T-cell (primary cell): ENCODE measurements at regions of chr1 and their contacts with region 1.

Region 1: DNA sequence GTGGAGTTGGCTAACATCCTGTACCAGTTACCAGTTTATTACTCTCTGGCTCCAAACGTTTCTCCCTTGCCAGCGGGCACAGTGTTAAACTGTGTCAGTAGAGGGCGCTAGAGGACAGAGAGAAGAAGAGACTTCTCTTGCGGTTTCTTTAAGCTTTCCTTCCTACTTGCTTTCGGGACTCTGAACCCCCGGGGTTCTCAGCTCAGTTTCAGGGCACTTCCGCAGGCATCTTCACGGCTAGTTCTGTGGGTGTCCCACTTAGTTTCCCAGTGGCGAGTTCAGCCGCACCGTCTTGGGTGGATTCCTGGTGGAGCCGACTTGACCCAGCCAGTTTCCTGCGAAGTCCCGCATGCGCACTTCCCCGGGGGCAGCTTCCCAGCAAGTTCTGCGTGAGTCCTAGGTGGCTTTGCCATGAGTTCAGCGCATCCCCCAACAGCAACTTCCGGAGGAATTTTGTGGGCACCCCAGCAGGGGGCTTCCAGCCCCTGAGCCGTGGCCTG is 37.9 kb upstream of the BTG2 start:
- DNase-seq: peak; percentile 53 to 94 (median 76)
- ATAC-seq: peak; percentile 55 to 69 (median 66)
- H3K4me3 ChIP-seq: peak overlapping the region; percentile 28 to 58
- H3K4me3 Mint-ChIP-seq: peak overlapping the region; percentile 85 to 86 (median 85)
- H3K27ac ChIP-seq: peak overlapping the region; percentile 60
- H3K27ac Mint-ChIP-seq: peak overlapping the region; percentile 90 to 93
- H3K4me1 ChIP-seq: peaks cover 14 to 37% of the 10 kb centered on the region in 2 experiments
- H3K4me1 Mint-ChIP-seq: peaks cover 20 to 24% (median 22%) of the 10 kb centered on the region in 3 donors
- H3K27me3 ChIP-seq: peaks cover 0 to 5% of the 10 kb centered on the region in 2 experiments
- H3K27me3 Mint-ChIP-seq: no peaks in the 10 kb centered on the region

Region 2: GRCh38 chr1:203177470-203178039 is 89.8 kb before region 1 on chr1:
- CTCF ChIA-PET with region 1: no interaction called
- POLR2A ChIA-PET with region 1: no interaction called
- DNase-seq: no peak
- ATAC-seq: no peak
- H3K4me3 ChIP-seq: no peak overlapping the region
- H3K4me3 Mint-ChIP-seq: no peak overlapping the region
- H3K27ac ChIP-seq: no peak overlapping the region
- H3K27ac Mint-ChIP-seq: no peak overlapping the region
- H3K4me1 ChIP-seq: no peaks in the 10 kb centered on the region
- H3K4me1 Mint-ChIP-seq: no peaks in the 10 kb centered on the region
- H3K27me3 ChIP-seq: peaks cover 0 to 39% of the 10 kb centered on the region in 2 experiments
- H3K27me3 Mint-ChIP-seq: peaks cover 0 to 14% of the 10 kb centered on the region in 2 donors

Region 3: GRCh38 chr1:203202431-203203245 is 64.8 kb before region 1 on chr1:
- CTCF ChIA-PET with region 1: no interaction called
- POLR2A ChIA-PET with region 1: no interaction called
- DNase-seq: no peak
- ATAC-seq: no peak
- H3K4me3 ChIP-seq: no peak overlapping the region
- H3K4me3 Mint-ChIP-seq: no peak overlapping the region
- H3K27ac ChIP-seq: no peak overlapping the region
- H3K27ac Mint-ChIP-seq: no peak overlapping the region
- H3K4me1 ChIP-seq: no peaks in the 10 kb centered on the region
- H3K4me1 Mint-ChIP-seq: no peaks in the 10 kb centered on the region
- H3K27me3 ChIP-seq: peaks cover 0 to 35% of the 10 kb centered on the region in 2 experiments
- H3K27me3 Mint-ChIP-seq: peaks cover 12 to 33% of the 10 kb centered on the region in 2 donors

Region 4: DNA sequence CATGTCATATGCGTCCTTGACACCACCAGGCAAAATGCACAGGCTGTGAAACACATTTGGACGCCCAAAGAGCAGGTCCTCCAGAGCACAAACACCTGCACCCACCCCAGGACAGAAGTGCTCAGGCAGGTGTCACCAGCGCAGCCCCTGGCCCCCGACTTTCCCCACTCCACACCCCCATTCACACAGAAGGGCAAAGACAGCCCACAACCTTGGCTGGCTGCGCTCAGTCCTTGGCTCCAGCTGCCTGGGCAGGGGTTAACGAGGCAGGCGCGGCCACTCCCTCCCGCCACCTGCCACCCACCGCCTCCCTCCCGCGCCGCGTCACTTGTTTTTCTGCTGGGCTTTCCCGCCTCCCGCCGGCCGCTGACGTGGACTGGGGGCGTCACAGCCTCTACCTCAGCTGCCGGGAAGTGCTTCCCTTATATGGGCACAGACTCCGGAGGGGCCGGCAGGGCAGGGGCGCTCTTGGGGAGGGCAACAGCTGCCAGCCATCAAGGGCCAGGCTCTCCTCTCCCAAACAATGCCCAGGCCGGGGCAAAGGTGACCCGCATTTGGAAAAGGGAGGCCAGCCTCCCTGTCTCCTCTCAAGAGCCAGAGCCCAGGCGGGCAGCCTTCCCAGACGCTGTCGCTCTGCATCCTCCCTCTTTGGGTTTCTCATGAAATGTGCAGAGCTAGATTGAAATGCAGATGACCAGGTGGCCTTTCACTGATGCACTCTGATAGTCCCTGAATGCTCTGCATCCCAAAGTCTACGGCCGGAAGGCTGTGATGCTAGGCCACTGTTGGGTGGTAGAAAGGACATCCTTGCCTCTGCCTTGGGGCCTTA is 23.1 kb after region 1 on chr1:
- CTCF ChIA-PET with region 1: interaction called, 3 to 39 read pairs
- POLR2A ChIA-PET with region 1: interaction called, 3 to 9 read pairs
- DNase-seq: peak; percentile 91 to 99 (median 98)
- ATAC-seq: peak; percentile 67 to 73 (median 71)
- H3K4me3 ChIP-seq: peak overlapping the region; percentile 30 to 49
- H3K4me3 Mint-ChIP-seq: peak overlapping the region; percentile 77 to 80 (median 78)
- H3K27ac ChIP-seq: peak overlapping the region; percentile 99
- H3K27ac Mint-ChIP-seq: peak overlapping the region; percentile 95 to 99
- H3K4me1 ChIP-seq: peaks cover 43 to 64% of the 10 kb centered on the region in 2 experiments
- H3K4me1 Mint-ChIP-seq: peaks cover 80 to 88% (median 83%) of the 10 kb centered on the region in 3 donors
- H3K27me3 ChIP-seq: no peaks in the 10 kb centered on the region
- H3K27me3 Mint-ChIP-seq: no peaks in the 10 kb centered on the region

Region 5: GRCh38 chr1:203320591-203321272 is 53.3 kb after region 1 on chr1:
- CTCF ChIA-PET with region 1: interaction called, 8 to 47 read pairs
- POLR2A ChIA-PET with region 1: interaction called in 1 of 2 experiments, 6 read pairs
- DNase-seq: peak; percentile 64 to 93 (median 81)
- ATAC-seq: peak; percentile 74 to 83 (median 80)
- H3K4me3 ChIP-seq: no peak overlapping the region
- H3K4me3 Mint-ChIP-seq: peak overlapping the region; percentile 55 to 71 (median 70)
- H3K27ac ChIP-seq: peak overlapping the region; percentile 100
- H3K27ac Mint-ChIP-seq: peak overlapping the region; percentile 97
- H3K4me1 ChIP-seq: peaks cover 69 to 75% of the 10 kb centered on the region in 2 experiments
- H3K4me1 Mint-ChIP-seq: peaks cover 89 to 94% (median 94%) of the 10 kb centered on the region in 3 donors
- H3K27me3 ChIP-seq: no peaks in the 10 kb centered on the region
- H3K27me3 Mint-ChIP-seq: no peaks in the 10 kb centered on the region

Region 6: GRCh38 chr1:203326830-203327683 is 59.7 kb after region 1 on chr1:
- CTCF ChIA-PET with region 1: interaction called, 3 to 258 read pairs
- POLR2A ChIA-PET with region 1: interaction called in 1 of 2 experiments, 6 read pairs
- DNase-seq: peak; percentile 83 to 97 (median 95)
- ATAC-seq: peak; percentile 76 to 84 (median 78)
- H3K4me3 ChIP-seq: peak overlapping the region; percentile 65 to 66
- H3K4me3 Mint-ChIP-seq: peak overlapping the region; percentile 70 to 82 (median 77)
- H3K27ac ChIP-seq: peak overlapping the region; percentile 100
- H3K27ac Mint-ChIP-seq: peak overlapping the region; percentile 97
- H3K4me1 ChIP-seq: peaks cover 53 to 66% of the 10 kb centered on the region in 2 experiments
- H3K4me1 Mint-ChIP-seq: peaks cover 59 to 67% (median 62%) of the 10 kb centered on the region in 3 donors
- H3K27me3 ChIP-seq: no peaks in the 10 kb centered on the region
- H3K27me3 Mint-ChIP-seq: no peaks in the 10 kb centered on the region

Region 7: GRCh38 chr1:203340112-203340804 is 72.9 kb after region 1 on chr1:
- CTCF ChIA-PET with region 1: interaction called, 40 to 258 read pairs
- POLR2A ChIA-PET with region 1: interaction called, 3 read pairs
- DNase-seq: peak in 34 of 35 experiments; percentile 18 to 81 (median 41)
- ATAC-seq: peak; percentile 65 to 78 (median 72)
- H3K4me3 ChIP-seq: no peak overlapping the region
- H3K4me3 Mint-ChIP-seq: no peak overlapping the region
- H3K27ac ChIP-seq: no peak overlapping the region
- H3K27ac Mint-ChIP-seq: peak overlapping the region in 1 of 2 donors; percentile 38
- H3K4me1 ChIP-seq: peaks cover 5 to 27% of the 10 kb centered on the region in 2 experiments
- H3K4me1 Mint-ChIP-seq: peaks cover 39 to 42% (median 40%) of the 10 kb centered on the region in 3 donors
- H3K27me3 ChIP-seq: peaks cover 5 to 21% of the 10 kb centered on the region in 2 experiments
- H3K27me3 Mint-ChIP-seq: peaks cover 4 to 28% of the 10 kb centered on the region in 2 donors

Region 8: DNA sequence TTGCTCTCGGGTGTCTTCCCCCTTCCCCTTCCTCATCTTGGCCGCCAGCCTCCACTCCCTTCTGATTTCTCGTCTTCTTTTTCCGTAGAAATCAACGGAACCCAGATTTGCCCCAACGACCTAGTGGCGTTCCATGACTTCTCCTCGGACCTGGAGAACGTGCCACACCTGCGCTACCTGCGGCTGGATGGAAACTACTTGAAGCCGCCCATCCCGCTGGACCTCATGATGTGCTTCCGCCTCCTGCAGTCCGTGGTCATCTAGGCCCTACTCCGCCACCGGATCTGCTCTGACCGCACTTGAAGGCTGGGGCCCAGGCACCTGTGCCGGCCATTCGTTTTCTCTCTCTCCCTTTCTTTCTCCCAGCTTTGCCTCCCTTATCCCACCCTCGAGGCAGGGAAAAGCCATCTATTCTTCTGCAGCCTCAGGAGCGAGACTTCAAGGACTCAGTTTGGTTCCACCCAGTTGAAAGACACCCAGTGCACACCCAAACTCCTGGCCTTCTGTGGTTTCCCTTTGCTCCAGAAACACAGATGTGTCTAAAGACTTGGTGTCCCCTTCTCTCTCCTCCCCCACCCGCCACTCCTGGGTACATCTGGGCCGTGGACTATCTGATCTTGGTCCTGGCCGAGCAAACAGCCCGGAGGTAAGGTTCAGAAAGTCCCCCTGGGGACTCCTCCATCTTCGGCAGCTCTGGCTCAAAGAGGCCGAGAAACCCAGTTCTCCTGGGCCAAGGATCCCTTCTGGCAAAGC is 219.4 kb after region 1 on chr1:
- CTCF ChIA-PET with region 1: interaction called, 23 to 65 read pairs
- POLR2A ChIA-PET with region 1: interaction called in 1 of 2 experiments, 3 read pairs
- DNase-seq: peak in 1 of 35 experiments; percentile 8
- ATAC-seq: no peak
- H3K4me3 ChIP-seq: no peak overlapping the region
- H3K4me3 Mint-ChIP-seq: peak overlapping the region; percentile 71 to 77 (median 76)
- H3K27ac ChIP-seq: no peak overlapping the region
- H3K27ac Mint-ChIP-seq: peak overlapping the region; percentile 5 to 74
- H3K4me1 ChIP-seq: peaks cover 2 to 17% of the 10 kb centered on the region in 2 experiments
- H3K4me1 Mint-ChIP-seq: peaks cover 7 to 10% (median 7%) of the 10 kb centered on the region in 3 donors
- H3K27me3 ChIP-seq: peaks cover 0 to 6% of the 10 kb centered on the region in 2 experiments
- H3K27me3 Mint-ChIP-seq: peaks cover 2 to 3% of the 10 kb centered on the region in 2 donors

Region 9: GRCh38 chr1:203504397-203505250 is 237.2 kb after region 1 on chr1:
- CTCF ChIA-PET with region 1: interaction called in 1 of 2 experiments, 11 read pairs
- POLR2A ChIA-PET with region 1: no interaction called
- DNase-seq: peak; percentile 31 to 84 (median 65)
- ATAC-seq: peak; percentile 50 to 82 (median 66)
- H3K4me3 ChIP-seq: no peak overlapping the region
- H3K4me3 Mint-ChIP-seq: no peak overlapping the region
- H3K27ac ChIP-seq: no peak overlapping the region
- H3K27ac Mint-ChIP-seq: no peak overlapping the region
- H3K4me1 ChIP-seq: peaks cover 0 to 2% of the 10 kb centered on the region in 2 experiments
- H3K4me1 Mint-ChIP-seq: peaks cover 2 to 7% (median 5%) of the 10 kb centered on the region in 3 donors
- H3K27me3 ChIP-seq: peaks cover 0 to 5% of the 10 kb centered on the region in 2 experiments
- H3K27me3 Mint-ChIP-seq: peaks cover 0 to 3% of the 10 kb centered on the region in 2 donors